ENCODE measurements at regions of chr14 and their contacts with region 1.

Region 1: DNA sequence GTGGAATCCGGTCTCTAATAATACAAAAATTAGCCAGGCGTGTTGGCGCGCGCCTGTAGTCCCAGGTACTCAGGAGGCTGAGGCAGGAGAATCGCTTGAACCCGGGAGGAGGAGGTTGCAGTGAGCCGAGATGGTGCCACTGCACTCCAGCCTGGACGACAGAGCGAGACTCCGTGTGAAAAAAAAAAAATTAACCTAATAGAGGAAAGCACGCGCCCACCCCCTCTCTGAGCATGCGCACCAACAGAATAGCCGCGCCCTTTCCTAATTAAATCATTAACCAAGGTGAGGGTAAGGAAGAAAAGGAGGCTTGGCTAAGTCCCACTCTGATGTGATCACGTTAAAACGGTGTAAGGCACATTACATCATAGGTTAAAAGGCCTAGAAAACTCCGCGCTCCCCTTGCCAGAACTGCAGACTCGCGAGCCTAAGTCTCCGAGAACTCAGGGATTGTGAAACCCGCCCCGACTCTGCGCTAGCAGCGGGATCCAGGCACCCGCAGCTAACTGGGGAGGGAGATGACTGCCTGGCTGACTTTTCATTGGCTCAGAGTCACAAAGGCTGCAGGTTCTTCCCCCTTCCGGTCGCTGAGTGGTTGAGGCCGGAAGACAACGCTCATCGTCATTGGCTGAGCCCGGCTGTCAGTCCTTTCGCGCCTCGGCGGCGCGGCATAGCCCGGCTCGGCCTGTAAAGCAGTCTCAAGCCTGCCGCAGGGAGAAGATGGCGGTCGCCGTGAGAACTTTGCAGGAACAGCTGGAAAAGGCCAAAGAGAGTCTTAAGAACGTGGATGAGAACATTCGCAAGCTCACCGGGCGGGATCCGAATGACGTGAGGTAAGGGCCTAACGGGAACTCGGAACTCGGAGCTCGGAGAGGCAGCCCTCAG is at the start of gene PNN:
- DNase-seq: peak; percentile 99 to 100
- H3K4me3 ChIP-seq: peak within 1 kb of the TSS; percentile 62 to 94
- H3K27ac ChIP-seq: peak within 1 kb of the TSS; percentile 89
- H3K4me1 ChIP-seq: peaks cover 20% of the 10 kb centered on the region
- H3K27me3 ChIP-seq: no peaks in the 10 kb centered on the region
- CTCF ChIP-seq: no peak
- POLR2A ChIP-seq: peak in 1 of 2 donors; percentile 89
- total RNA-seq, gene PNN: 54.5 TPM

Region 2: DNA sequence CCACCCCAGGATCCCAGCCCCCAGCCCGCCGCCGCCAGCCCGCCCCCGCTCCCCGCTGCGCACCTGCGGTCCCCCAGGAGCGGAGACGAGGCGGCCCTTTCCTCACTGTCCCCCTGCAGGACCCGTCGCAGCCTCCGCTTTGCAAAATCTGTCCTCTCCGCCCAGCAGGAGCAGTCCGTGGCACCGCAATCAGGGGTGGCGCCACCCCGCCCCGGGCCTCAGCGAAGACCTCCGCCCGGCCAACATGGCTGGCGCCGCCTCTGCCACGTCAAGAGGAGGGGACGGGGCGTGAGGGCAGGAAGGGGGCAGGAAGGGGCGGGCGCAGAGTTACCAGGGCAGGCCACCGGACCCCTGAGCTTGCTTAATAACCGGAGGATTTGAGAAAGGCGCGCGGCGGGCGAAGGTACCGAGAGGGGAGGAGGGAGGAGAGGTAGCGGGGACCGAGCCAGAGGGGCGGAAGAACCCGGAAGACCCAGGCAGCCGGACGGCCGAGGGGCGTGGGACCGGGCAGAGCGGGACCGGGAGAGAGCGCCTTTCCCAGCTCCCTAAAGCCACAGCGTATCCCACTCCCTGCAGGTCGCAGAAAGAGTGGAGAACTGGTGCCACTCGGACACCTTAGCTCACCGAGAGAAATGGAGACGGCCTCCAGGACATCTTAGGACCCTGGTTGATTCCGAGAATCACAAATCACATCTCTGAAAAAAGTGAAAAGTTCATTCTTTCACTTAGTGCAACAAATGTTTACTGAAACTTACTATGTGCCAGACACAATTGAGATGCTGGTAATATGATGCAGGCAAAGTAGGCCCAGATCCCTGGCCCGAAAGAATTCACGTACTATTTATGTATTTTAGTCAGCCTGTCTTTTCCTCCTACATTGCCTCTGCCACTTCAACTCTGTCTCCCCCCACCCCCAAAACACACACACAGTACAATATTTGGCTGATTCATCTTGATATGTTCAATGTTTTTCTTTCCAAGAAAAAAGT is 71.5 kb before region 1 on chr14 and contains the start of gene SEC23A:
- intact Hi-C with region 1: loop called (anchors 2 kb)
- DNase-seq: peak in 1 of 2 donors; percentile 95
- H3K4me3 ChIP-seq: peak within 1 kb of the TSS; percentile 71 to 85
- H3K27ac ChIP-seq: peak within 1 kb of the TSS; percentile 96
- H3K4me1 ChIP-seq: peaks cover 44% of the 10 kb centered on the region
- H3K27me3 ChIP-seq: no peaks in the 10 kb centered on the region
- CTCF ChIP-seq: no peak
- POLR2A ChIP-seq: peak in 1 of 2 donors; percentile 88
- total RNA-seq, gene SEC23A: 54.8 TPM

Region 3: DNA sequence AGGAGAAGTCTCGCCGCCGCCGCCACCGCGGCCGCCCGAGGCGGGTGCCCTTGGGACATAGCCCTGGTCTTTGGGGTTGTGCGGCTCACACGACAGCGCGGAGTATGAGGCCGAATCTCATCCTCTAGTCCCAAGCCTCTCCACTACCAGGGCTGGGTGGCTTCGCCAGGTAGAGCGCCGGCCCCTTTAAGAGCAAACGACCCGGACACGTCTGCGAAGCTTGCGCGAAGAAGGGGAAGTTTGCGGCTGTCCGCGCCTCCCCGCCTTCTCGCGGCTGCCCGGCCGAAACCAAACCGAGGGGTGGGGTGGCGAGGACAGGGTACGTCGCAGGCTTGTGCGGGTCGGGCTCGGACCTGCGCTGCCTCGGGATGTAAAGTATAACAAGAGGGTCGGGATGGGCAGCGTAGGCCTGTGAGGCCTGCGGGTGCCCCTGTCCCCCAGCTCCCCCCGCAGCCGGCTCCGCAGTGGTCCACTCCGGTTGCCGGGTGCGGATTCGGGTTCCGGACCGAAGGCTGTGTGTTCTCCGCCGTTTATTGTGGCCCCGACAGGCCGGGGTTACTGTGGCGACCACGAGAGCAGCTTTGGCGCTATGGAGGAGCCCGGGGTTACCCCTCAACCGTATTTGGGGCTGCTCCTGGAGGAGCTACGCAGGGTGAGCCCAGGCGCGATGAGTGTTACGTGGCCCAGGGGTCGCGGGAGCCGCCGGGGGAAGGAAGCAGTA is 92.2 kb after region 1 on chr14:
- intact Hi-C with region 1: loop called (anchors 5 kb)
- DNase-seq: no peak
- H3K4me3 ChIP-seq: peak overlapping the region; percentile 75 to 90
- H3K27ac ChIP-seq: peak overlapping the region; percentile 98
- H3K4me1 ChIP-seq: peaks cover 34% of the 10 kb centered on the region
- H3K27me3 ChIP-seq: no peaks in the 10 kb centered on the region
- CTCF ChIP-seq: no peak
- POLR2A ChIP-seq: peak in 1 of 2 donors; percentile 16

Region 4: GRCh38 chr14:39432179-39432618 is 257.4 kb after region 1 on chr14 and contains the start of gene FBXO33:
- intact Hi-C with region 1: loop called (anchors 5 kb)
- DNase-seq: peak in 1 of 2 donors; percentile 99
- H3K4me3 ChIP-seq: peak within 1 kb of the TSS; percentile 98 to 99
- H3K27ac ChIP-seq: peak within 1 kb of the TSS; percentile 98
- H3K4me1 ChIP-seq: peaks cover 52% of the 10 kb centered on the region
- H3K27me3 ChIP-seq: no peaks in the 10 kb centered on the region
- CTCF ChIP-seq: no peak
- POLR2A ChIP-seq: no peak
- total RNA-seq, gene FBXO33: 11.5 TPM

Region 5: DNA sequence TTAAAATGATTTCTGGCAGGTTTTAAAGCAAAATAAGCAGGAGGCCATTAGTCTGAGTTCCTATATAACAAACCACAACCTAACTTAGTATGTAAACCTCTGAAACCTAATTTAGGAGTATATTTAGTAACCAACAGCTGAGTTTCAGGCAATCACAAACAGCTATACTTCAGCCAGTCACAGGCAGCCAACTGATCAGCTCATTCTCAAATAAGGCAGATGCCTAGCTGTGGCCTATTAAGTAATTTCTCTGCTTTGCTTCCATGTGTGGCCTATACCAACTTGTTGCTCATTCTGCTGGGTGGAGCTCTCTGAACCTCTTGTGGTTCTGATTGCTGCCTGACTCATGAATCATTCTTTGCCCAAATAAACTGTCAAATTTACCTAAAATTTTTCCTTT is 666.3 kb after region 1 on chr14:
- intact Hi-C with region 1: no loop called
- DNase-seq: no peak
- H3K4me3 ChIP-seq: no peak overlapping the region
- H3K27ac ChIP-seq: no peak overlapping the region
- H3K4me1 ChIP-seq: no peaks in the 10 kb centered on the region
- H3K27me3 ChIP-seq: no peaks in the 10 kb centered on the region
- CTCF ChIP-seq: no peak
- POLR2A ChIP-seq: no peak

Measured in vagina (tissue), 2 donors.